Activated CD4-positive, alpha-beta T cell treated with anti-CD3 and anti-CD28 coated beads for 36 hours (primary cell): ENCODE measurements at regions of chr4 and their contacts with region 1.

Region 1: DNA sequence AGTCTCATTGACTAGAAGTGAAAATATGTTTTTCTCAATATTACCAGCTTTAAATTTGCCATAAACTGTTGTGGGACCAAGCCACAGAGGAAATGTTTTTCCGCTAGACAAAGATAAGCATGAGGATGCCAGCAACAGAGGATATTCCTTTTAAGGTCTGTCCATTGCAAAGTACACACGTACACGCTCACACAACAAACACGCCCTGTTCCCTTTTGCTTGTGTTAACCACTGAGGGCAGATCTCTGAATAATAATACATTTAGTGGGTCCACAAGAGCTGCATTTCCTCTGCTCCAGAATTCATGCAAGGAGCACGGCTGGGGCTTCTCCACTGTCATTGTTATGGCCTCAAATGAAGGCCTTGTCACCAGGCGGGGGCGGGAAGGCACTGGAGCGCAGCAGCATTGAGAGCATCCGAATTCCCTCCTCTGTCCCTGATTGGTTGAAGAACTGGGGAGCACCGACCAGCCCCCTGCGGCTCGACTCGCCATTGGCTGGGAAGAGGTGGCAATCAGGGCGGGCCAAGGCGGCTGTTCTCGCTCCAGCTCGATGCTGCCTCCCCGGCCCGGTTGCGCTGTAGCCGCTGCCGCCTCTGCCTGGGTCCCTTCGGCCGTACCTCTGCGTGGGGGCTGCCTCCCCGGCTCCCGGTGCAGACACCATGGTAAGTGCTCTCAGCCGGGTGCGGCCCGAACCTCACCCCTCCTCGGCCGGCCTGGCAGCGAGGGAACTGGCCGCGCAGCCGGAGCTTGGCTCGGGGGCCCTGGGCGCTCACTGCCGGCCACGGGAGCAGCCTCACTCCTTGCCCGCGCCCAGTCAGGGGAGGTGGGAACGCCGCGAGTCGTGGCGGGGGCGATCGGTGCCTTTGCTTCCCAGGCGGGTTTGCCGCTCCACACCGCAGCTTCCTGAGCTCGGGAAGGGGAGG is at the start of gene GUCY1B1:
- DNase-seq: peak; percentile 87
- ATAC-seq: peak; percentile 100
- H3K4me3 Mint-ChIP-seq: peak within 1 kb of the TSS; percentile 54
- H3K27ac Mint-ChIP-seq: no peak within 1 kb of the TSS
- H3K4me1 Mint-ChIP-seq: peaks cover 9% of the 10 kb centered on the region
- H3K27me3 Mint-ChIP-seq: peaks cover 21% of the 10 kb centered on the region
- total RNA-seq, gene GUCY1B1: 0.37 to 0.63 TPM

Region 2: DNA sequence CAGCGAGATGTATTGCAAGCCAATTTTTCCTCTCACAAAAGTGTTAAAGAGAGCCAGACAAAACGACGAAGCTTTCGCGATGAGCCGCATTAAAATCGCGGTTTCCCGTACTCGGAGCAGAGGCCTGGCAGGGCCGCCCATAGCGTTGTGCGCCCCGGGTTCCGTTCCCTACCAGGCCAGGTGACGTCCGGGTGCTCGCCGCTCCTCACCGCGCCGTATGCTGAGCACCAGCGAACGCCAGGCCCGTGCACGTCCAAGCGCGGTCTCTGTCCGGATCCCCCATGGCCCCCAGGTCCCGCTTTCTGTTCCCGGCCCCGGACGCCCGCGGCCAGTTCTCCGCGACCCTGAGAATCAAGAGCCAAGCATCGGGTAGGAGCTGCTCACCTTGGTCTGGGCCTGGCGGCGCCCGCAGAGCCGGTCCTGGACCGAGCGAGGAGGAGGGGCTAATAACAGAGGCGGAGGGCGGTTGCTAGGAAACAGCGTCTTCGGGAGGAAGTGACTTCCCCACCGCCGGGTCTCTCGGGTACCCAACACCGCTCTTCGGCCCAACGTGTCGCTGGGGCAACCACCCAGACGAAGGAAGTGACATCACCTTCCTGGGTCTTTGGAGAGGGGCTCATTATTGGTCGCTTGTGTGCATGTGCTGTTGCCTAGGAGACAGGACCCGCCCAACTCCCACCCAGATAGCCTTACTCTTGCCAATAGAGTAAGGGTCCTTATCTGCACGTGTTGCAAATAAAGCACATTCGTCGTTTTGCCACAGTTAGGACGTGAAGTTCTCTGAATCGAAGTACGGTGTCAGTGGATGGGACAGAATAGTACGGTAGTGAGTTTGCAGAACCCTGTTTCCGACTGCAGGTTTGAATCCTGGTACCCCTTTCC is 382.1 kb before region 1 on chr4 and contains the start of gene MAP9:
- CTCF ChIA-PET with region 1: no interaction called
- POLR2A ChIA-PET with region 1: no interaction called
- intact Hi-C with region 1: loop called in 1 of 2 experiments (anchors 2 kb)
- DNase-seq: peak; percentile 94
- ATAC-seq: peak; percentile 96
- H3K4me3 Mint-ChIP-seq: peak within 1 kb of the TSS; percentile 83
- H3K27ac Mint-ChIP-seq: peak within 1 kb of the TSS; percentile 79
- H3K4me1 Mint-ChIP-seq: peaks cover 16% of the 10 kb centered on the region
- H3K27me3 Mint-ChIP-seq: no peaks in the 10 kb centered on the region
- total RNA-seq, gene MAP9: 8.0 to 8.1 TPM

Region 3: GRCh38 chr4:155667568-155668511 is 90.9 kb before region 1 on chr4:
- CTCF ChIA-PET with region 1: no interaction called
- POLR2A ChIA-PET with region 1: no interaction called
- intact Hi-C with region 1: loop called in 1 of 2 experiments (anchors 1 kb)
- DNase-seq: peak; percentile 17
- ATAC-seq: peak; percentile 51
- H3K4me3 Mint-ChIP-seq: peak overlapping the region; percentile 67
- H3K27ac Mint-ChIP-seq: no peak overlapping the region
- H3K4me1 Mint-ChIP-seq: peaks cover 15% of the 10 kb centered on the region
- H3K27me3 Mint-ChIP-seq: peaks cover 60% of the 10 kb centered on the region

Region 4: GRCh38 chr4:155984106-155984797 is 225.5 kb after region 1 on chr4:
- CTCF ChIA-PET with region 1: no interaction called
- POLR2A ChIA-PET with region 1: no interaction called
- intact Hi-C with region 1: no loop called
- DNase-seq: no peak
- ATAC-seq: no peak
- H3K4me3 Mint-ChIP-seq: no peak overlapping the region
- H3K27ac Mint-ChIP-seq: no peak overlapping the region
- H3K4me1 Mint-ChIP-seq: no peaks in the 10 kb centered on the region
- H3K27me3 Mint-ChIP-seq: peaks cover 2% of the 10 kb centered on the region

Region 5: GRCh38 chr4:156734965-156735895 is 976.5 kb after region 1 on chr4:
- CTCF ChIA-PET with region 1: no interaction called
- POLR2A ChIA-PET with region 1: no interaction called
- intact Hi-C with region 1: no loop called
- DNase-seq: no peak
- ATAC-seq: no peak
- H3K4me3 Mint-ChIP-seq: no peak overlapping the region
- H3K27ac Mint-ChIP-seq: no peak overlapping the region
- H3K4me1 Mint-ChIP-seq: no peaks in the 10 kb centered on the region
- H3K27me3 Mint-ChIP-seq: no peaks in the 10 kb centered on the region